Esophagus muscularis mucosa (tissue), 4 donors: ENCODE measurements at regions of chr7 and their contacts with region 1.

Region 1: DNA sequence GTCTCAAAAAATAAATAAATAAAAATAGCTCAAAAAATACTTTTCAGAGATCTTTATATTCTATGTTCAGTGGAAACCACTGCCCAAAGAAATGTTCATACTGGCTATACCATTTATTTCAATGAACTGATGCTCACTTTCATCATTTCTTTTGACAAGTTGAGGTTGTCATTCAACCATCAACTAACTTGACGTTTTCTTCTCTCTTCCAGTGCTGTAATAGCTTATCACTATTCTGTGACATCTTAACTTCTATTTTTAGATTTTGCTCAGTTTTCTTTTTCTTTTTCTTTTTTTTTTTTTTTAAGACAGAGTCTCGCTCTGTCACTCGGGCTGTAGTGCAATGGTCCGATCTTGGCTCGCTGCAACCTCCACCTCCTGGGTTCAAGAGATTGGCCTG is 8.7 kb upstream of the CTAGE4 start:
- DNase-seq: no peak
- H3K4me3 ChIP-seq: no peak overlapping the region
- H3K27ac ChIP-seq: no peak overlapping the region
- H3K4me1 ChIP-seq: no peaks in the 10 kb centered on the region
- H3K27me3 ChIP-seq: no peaks in the 10 kb centered on the region
- CTCF ChIP-seq: no peak
- EP300 ChIP-seq: no peak
- POLR2A ChIP-seq: no peak

Region 2: DNA sequence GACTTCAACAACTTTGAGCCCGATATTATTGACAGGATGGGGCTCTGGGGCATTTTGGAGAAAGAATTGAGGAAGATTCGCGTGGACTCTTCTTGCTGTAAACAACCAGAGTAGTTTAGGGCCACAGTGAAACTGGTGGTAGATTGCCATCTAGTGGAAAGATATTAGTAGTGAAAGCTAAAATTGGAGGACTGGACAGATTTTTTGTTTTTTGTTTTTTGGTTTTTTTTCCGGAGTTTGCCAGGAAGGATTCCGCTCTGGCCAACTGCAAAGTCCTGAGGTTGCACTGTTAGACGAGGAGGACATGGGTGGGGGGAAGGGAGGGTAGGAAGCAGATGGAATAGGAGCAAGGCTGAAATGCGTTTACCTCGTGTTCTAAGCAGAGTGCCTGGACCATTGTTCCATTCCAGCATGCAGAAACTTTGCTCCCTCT is 217.2 kb after region 1 on chr7:
- intact Hi-C with region 1: loop called (anchors 10 kb)
- DNase-seq: no peak
- H3K4me3 ChIP-seq: peak overlapping the region; percentile 1 to 34 (median 18)
- H3K27ac ChIP-seq: no peak overlapping the region
- H3K4me1 ChIP-seq: peaks cover 4 to 23% (median 22%) of the 10 kb centered on the region in 4 donors
- H3K27me3 ChIP-seq: no peaks in the 10 kb centered on the region
- CTCF ChIP-seq: peak; percentile 72 to 79 (median 77)
- EP300 ChIP-seq: no peak
- POLR2A ChIP-seq: no peak

Region 3: GRCh38 chr7:144777005-144777751 is 602.6 kb after region 1 on chr7:
- intact Hi-C with region 1: no loop called
- DNase-seq: no peak
- H3K4me3 ChIP-seq: no peak overlapping the region
- H3K27ac ChIP-seq: no peak overlapping the region
- H3K4me1 ChIP-seq: peaks cover 0 to 7% (median 0%) of the 10 kb centered on the region in 4 donors
- H3K27me3 ChIP-seq: no peaks in the 10 kb centered on the region
- CTCF ChIP-seq: no peak
- EP300 ChIP-seq: no peak
- POLR2A ChIP-seq: no peak